ENCODE measurements at regions of chr19 and their contacts with region 1.

Region 1: GRCh38 chr19:44741841-44742352 is 6.6 kb upstream of the BCL3 start:
- DNase-seq: peak; percentile 100
- H3K4me3 Mint-ChIP-seq: peak overlapping the region; percentile 55
- H3K27ac Mint-ChIP-seq: peak overlapping the region; percentile 85
- H3K4me1 Mint-ChIP-seq: peaks cover 43% of the 10 kb centered on the region
- H3K27me3 Mint-ChIP-seq: no peaks in the 10 kb centered on the region
- CTCF ChIP-seq: no peak

Region 2: GRCh38 chr19:44752816-44753618 is 11.1 kb after region 1 on chr19:
- CTCF ChIA-PET with region 1: interaction called, 7 read pairs
- POLR2A ChIA-PET with region 1: interaction called, 28 read pairs
- intact Hi-C with region 1: no loop called
- DNase-seq: peak; percentile 98
- H3K4me3 Mint-ChIP-seq: peak overlapping the region; percentile 73
- H3K27ac Mint-ChIP-seq: peak overlapping the region; percentile 9
- H3K4me1 Mint-ChIP-seq: peaks cover 40% of the 10 kb centered on the region
- H3K27me3 Mint-ChIP-seq: no peaks in the 10 kb centered on the region
- CTCF ChIP-seq: no peak

Region 3: GRCh38 chr19:44764975-44765948 is 23.4 kb after region 1 on chr19:
- CTCF ChIA-PET with region 1: interaction called, 20 read pairs
- POLR2A ChIA-PET with region 1: interaction called, 47 read pairs
- intact Hi-C with region 1: loop called (anchors 1 kb)
- DNase-seq: peak; percentile 52
- H3K4me3 Mint-ChIP-seq: no peak overlapping the region
- H3K27ac Mint-ChIP-seq: no peak overlapping the region
- H3K4me1 Mint-ChIP-seq: peaks cover 7% of the 10 kb centered on the region
- H3K27me3 Mint-ChIP-seq: no peaks in the 10 kb centered on the region
- CTCF ChIP-seq: no peak

Region 4: GRCh38 chr19:44972802-44973201 is 230.9 kb after region 1 on chr19:
- CTCF ChIA-PET with region 1: no interaction called
- POLR2A ChIA-PET with region 1: no interaction called
- intact Hi-C with region 1: no loop called
- DNase-seq: no peak
- H3K4me3 Mint-ChIP-seq: no peak overlapping the region
- H3K27ac Mint-ChIP-seq: no peak overlapping the region
- H3K4me1 Mint-ChIP-seq: no peaks in the 10 kb centered on the region
- H3K27me3 Mint-ChIP-seq: no peaks in the 10 kb centered on the region
- CTCF ChIP-seq: no peak

Measured in MCF 10A (cell line).